HAP-1 (cell line): ENCODE measurements at regions of chr14 and their contacts with region 1.

Region 1: DNA sequence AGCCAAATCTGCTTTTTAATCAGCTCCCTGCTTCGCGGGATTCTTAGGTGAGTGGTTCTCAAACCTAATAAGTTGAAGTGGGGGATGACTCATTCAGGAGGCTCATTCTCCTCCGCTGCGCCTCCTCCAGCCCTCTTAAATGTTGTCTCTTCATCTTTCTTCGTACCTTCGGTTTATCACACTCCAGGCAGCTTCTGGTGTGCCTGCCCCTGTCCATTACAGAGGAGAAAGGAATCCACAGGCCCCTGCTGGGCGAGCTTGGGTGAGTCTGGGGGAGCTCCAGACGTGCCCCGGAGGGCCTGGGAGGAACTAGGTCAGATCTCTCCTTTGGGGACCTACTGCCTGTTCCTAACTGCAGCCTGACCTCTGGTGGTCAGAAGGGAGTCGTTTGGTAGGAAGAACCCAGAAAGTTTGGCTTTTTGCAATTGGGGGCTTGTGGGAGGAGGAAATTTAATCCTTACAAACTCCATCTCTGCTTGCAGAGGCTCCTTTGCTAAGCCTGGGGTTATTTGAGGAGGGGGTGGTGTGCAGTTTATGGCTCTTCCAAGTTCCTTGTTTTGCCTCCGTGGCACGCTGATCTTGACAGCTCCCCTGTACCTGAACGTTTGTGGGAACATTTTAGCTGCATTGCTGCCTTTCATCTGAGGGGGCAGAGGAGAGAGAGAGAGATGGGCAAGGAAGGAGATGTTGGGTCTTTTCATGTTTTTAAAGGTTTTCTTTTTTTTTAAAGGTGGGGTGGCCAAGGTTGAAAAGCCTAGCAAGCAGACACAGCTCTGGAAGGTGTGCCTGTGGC is 84.1 kb upstream of the GNG2 start:
- DNase-seq: peak; percentile 60 to 78
- H3K4me3 ChIP-seq: no peak overlapping the region
- H3K4me1 ChIP-seq: no peaks in the 10 kb centered on the region; the same call in 1 of the 2 replicates
- H3K27me3 ChIP-seq: peaks cover 3% of the 10 kb centered on the region; the same call in 1 of the 2 replicates

Region 2: GRCh38 chr14:50559990-50560930 is 1216.0 kb before region 1 on chr14 and contains the start of gene ATL1:
- in situ Hi-C with region 1: no loop called
- DNase-seq: peak; percentile 74 to 84
- H3K4me3 ChIP-seq: peak within 1 kb of the TSS; percentile 52
- H3K4me1 ChIP-seq: peaks cover 32% of the 10 kb centered on the region
- H3K27me3 ChIP-seq: no peaks in the 10 kb centered on the region

Region 3: GRCh38 chr14:50954811-50955372 is 821.4 kb before region 1 on chr14:
- in situ Hi-C with region 1: no loop called
- DNase-seq: peak in 1 of 2 experiments; percentile 63
- H3K4me3 ChIP-seq: no peak overlapping the region
- H3K4me1 ChIP-seq: peaks cover 37% of the 10 kb centered on the region
- H3K27me3 ChIP-seq: no peaks in the 10 kb centered on the region

Region 4: GRCh38 chr14:51430633-51431032 is 345.7 kb before region 1 on chr14:
- in situ Hi-C with region 1: no loop called
- DNase-seq: peak; percentile 78 to 91
- H3K4me3 ChIP-seq: no peak overlapping the region
- H3K4me1 ChIP-seq: peaks cover 16% of the 10 kb centered on the region
- H3K27me3 ChIP-seq: no peaks in the 10 kb centered on the region

Region 5: GRCh38 chr14:51651388-51652167 is 124.7 kb before region 1 on chr14 and contains the start of gene FRMD6:
- in situ Hi-C with region 1: loop called (anchors 10 kb)
- DNase-seq: peak; percentile 67 to 88
- H3K4me3 ChIP-seq: peak within 1 kb of the TSS; percentile 76
- H3K4me1 ChIP-seq: peaks cover 18% of the 10 kb centered on the region
- H3K27me3 ChIP-seq: no peaks in the 10 kb centered on the region